Psoas muscle (tissue), 8 donors: ENCODE measurements at regions of chr4 and their contacts with region 1.

Region 1: DNA sequence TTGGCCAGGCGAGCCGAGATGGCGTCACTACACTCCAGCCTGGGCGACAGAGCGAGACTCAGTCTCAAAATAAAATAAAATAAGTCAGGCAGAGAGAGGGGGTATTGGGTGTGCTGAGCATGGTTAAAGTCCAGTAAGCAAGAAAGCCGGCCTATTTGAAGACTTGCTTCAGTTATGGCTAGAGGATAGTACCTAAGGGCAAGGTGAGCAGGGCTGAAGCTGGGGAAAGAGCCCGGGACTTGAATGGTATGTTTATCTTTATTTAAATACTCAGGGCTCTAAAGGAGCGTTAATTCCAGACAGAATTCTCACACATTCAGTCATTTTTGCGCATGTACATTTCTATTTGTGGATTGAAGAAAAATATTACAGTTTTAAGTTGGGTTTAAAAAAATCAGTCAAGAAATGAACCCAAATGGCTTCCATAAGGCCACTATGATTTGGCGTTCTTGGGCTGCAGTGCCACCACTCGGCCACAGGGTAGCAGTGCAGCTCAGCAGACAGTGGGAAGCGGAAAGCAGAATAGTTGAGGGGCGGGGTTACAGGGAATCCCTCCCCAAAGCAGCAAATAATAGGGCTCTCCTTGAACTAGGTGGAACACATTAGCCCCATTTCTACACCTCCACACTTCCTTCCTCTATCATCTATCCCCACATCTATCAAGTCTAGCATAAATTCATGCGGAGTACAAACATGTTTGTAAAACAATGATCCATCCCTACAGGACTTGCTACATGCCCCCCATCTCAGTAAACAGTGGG is 37.2 kb upstream of the SH3D19 start:
- DNase-seq: peak; percentile 82 to 86
- ATAC-seq: peak; percentile 96 to 99 (median 98)
- H3K4me3 ChIP-seq: no peak overlapping the region
- H3K27ac ChIP-seq: peak overlapping the region; percentile 20
- H3K4me1 ChIP-seq: peaks cover 3% of the 10 kb centered on the region
- H3K27me3 ChIP-seq: no peaks in the 10 kb centered on the region
- CTCF ChIP-seq: peak; percentile 99

Region 2: DNA sequence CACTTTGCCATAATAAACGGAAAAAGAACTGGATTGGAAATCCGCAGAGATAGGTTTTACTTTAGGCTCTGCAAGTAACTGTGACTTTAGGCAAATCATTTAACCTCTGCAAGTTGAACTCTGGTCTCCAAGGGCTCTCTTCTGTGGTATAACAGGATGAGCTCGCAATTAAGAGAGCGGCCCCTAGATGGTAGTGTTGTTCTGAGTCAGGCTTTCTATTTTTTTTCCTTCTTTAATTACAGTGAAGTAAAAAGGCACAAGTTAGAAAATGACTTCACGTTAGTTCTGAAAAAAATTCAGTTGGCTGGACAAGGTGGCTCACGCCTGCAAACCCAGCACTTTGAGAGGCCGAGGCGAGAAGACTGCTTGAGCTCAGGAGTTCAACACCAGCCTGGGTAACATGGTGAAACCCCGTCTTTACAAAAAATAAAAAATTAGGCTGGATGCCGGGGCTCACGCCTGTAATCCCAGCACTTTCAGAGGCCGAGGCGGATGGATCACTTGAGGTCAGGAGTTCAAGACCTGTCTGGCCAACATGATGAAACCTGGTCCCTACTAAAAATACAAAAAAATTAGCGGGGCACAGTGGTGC is 245.1 kb before region 1 on chr4:
- intact Hi-C with region 1: loop called (anchors 5 to 10 kb)
- DNase-seq: no peak
- ATAC-seq: peak; percentile 55 to 86 (median 77)
- H3K4me3 ChIP-seq: no peak overlapping the region
- H3K27ac ChIP-seq: peak overlapping the region; percentile 39
- H3K4me1 ChIP-seq: no peaks in the 10 kb centered on the region
- H3K27me3 ChIP-seq: no peaks in the 10 kb centered on the region
- CTCF ChIP-seq: peak; percentile 68

Region 3: GRCh38 chr4:151276787-151277562 is 85.6 kb before region 1 on chr4 and contains the start of gene PRSS48:
- intact Hi-C with region 1: loop called (anchors 5 kb)
- DNase-seq: peak; percentile 64 to 78
- ATAC-seq: peak; percentile 70 to 97 (median 91)
- H3K4me3 ChIP-seq: no peak within 1 kb of the TSS
- H3K27ac ChIP-seq: no peak within 1 kb of the TSS
- H3K4me1 ChIP-seq: peaks cover 7% of the 10 kb centered on the region
- H3K27me3 ChIP-seq: no peaks in the 10 kb centered on the region
- CTCF ChIP-seq: peak; percentile 69
- total RNA-seq, gene PRSS48: not detected

Region 4: GRCh38 chr4:151325111-151325948 is 37.3 kb before region 1 on chr4 and contains the start of gene SH3D19:
- intact Hi-C with region 1: no loop called
- DNase-seq: peak; percentile 70 to 84
- ATAC-seq: peak; percentile 63 to 82 (median 73)
- H3K4me3 ChIP-seq: peak within 1 kb of the TSS; percentile 87
- H3K27ac ChIP-seq: peak within 1 kb of the TSS; percentile 94
- H3K4me1 ChIP-seq: peaks cover 4% of the 10 kb centered on the region
- H3K27me3 ChIP-seq: no peaks in the 10 kb centered on the region
- CTCF ChIP-seq: no peak
- total RNA-seq, gene SH3D19: 26.9 to 59.0 (median 32.4) TPM

Region 5: GRCh38 chr4:151408630-151409469 is 46.3 kb after region 1 on chr4 and contains the start of gene FHIP1A:
- intact Hi-C with region 1: loop called in 1 of 2 experiments (anchors 5 kb)
- DNase-seq: peak; percentile 78 to 93
- ATAC-seq: peak; percentile 82 to 92 (median 85)
- H3K4me3 ChIP-seq: peak within 1 kb of the TSS; percentile 74
- H3K27ac ChIP-seq: peak within 1 kb of the TSS; percentile 85
- H3K4me1 ChIP-seq: peaks cover 12% of the 10 kb centered on the region
- H3K27me3 ChIP-seq: no peaks in the 10 kb centered on the region
- CTCF ChIP-seq: peak; percentile 19
- total RNA-seq, gene FHIP1A: 37.7 to 46.7 (median 44.9) TPM

Region 6: DNA sequence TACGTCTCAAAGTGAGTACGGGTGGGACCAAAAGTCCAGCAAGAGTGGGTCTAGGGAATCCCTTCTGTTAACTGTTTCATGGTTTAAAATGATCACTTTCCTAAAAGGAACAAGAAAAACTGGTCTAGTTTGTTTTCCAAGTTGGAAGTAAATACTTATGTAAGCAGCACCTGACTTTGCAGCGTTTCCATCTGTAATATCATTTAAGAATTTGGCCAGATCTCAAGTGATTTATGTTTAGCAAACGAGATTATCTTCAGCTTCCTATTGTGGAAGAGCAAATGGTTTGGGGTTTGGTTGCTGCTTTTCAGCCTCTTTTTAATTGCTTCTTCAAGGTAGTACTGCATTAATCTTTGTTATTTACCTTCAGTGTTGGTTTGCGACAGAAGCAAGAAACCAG is 96.8 kb after region 1 on chr4:
- intact Hi-C with region 1: loop called in 1 of 2 experiments (anchors 10 kb)
- DNase-seq: no peak
- ATAC-seq: no peak
- H3K4me3 ChIP-seq: peak overlapping the region; percentile 22
- H3K27ac ChIP-seq: peak overlapping the region; percentile 52
- H3K4me1 ChIP-seq: peaks cover 64% of the 10 kb centered on the region
- H3K27me3 ChIP-seq: no peaks in the 10 kb centered on the region
- CTCF ChIP-seq: no peak

Region 7: DNA sequence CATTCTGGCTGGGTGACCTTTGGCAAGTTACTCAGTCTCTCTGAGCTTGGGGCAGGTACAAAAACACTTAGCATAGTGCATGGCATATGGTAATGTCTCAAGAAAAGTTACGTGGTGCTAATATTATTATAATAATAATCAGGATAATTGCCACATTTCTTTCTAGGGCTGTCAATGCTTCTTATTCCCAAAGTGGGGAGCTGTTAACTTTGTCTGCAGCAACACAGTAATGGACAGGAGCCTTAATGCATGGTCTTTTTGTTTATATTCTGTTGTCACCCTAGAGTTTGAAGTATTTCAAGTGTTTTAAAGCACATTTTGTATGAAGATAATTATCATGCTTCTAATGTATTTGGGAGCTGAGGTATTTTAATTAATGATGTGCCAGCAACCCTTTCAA is 168.2 kb after region 1 on chr4:
- intact Hi-C with region 1: no loop called
- DNase-seq: no peak
- ATAC-seq: no peak
- H3K4me3 ChIP-seq: no peak overlapping the region
- H3K27ac ChIP-seq: peak overlapping the region; percentile 83
- H3K4me1 ChIP-seq: peaks cover 43% of the 10 kb centered on the region
- H3K27me3 ChIP-seq: no peaks in the 10 kb centered on the region
- CTCF ChIP-seq: no peak

Region 8: GRCh38 chr4:151614561-151614960 is 252.0 kb after region 1 on chr4:
- intact Hi-C with region 1: loop called in 1 of 2 experiments (anchors 10 kb)
- DNase-seq: no peak
- ATAC-seq: no peak
- H3K4me3 ChIP-seq: no peak overlapping the region
- H3K27ac ChIP-seq: no peak overlapping the region
- H3K4me1 ChIP-seq: peaks cover 15% of the 10 kb centered on the region
- H3K27me3 ChIP-seq: no peaks in the 10 kb centered on the region
- CTCF ChIP-seq: no peak